CD8-positive, alpha-beta T cell (primary cell): ENCODE measurements at regions of chr19 and their contacts with region 1.

Region 1: DNA sequence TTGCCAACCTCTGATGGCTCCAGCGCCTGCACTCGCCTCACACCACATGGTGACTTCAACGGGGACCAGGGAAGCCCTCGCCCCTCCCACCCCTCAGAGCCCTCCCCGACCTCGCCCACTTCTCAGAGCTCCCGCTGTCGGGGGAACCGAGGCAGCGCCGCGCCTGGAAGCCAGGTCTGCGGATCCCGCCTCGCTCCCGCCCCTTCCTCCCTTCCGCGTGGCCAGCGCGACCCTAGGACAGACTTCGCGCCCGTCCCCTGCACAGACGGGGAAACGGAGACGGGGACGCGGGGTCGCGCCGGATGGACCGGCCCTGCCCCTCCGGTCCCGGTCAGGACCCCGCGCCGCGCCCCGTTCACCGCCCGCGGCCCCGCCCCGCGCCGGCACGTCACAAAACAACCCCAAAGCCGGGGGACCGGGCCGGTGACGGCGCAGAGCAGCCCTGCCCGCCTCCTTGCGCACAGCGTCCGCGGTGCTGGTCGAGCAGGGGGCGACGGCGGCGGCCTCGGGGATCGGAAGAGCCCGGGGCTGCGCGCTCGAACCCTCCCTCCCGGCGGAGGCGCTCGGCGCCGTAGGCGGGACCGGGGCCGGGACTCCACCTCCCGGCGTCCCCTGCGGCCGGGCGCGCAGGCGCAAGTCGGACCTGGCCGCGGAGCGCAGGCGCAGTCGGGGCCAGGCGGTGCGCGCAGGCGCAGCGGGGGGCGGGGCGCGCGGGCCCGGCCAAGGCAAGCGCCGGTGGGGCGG is 379 bp upstream of the CDC34 start:
- DNase-seq: peak; percentile 79 to 93 (median 85)
- ATAC-seq: peak; percentile 80
- H3K4me3 ChIP-seq: peak overlapping the region; percentile 64 to 87
- H3K4me3 Mint-ChIP-seq: peak overlapping the region; percentile 82
- H3K27ac ChIP-seq: peak overlapping the region; percentile 73 to 74
- H3K27ac Mint-ChIP-seq: peak overlapping the region; percentile 87
- H3K4me1 ChIP-seq: peaks cover 20% of the 10 kb centered on the region
- H3K4me1 Mint-ChIP-seq: peaks cover 14% of the 10 kb centered on the region
- H3K27me3 ChIP-seq: no peaks in the 10 kb centered on the region
- H3K27me3 Mint-ChIP-seq: peaks cover 7% of the 10 kb centered on the region
- CTCF ChIP-seq: no peak

Region 2: GRCh38 chr19:488505-489417 is 42.4 kb before region 1 on chr19:
- CTCF ChIA-PET with region 1: interaction called, 3 read pairs
- POLR2A ChIA-PET with region 1: no interaction called
- intact Hi-C with region 1: loop called in 1 of 2 experiments (anchors 1 kb)
- DNase-seq: peak; percentile 85 to 96 (median 93)
- ATAC-seq: peak; percentile 93
- H3K4me3 ChIP-seq: peak overlapping the region; percentile 55 to 84
- H3K4me3 Mint-ChIP-seq: peak overlapping the region; percentile 83
- H3K27ac ChIP-seq: peak overlapping the region; percentile 74 to 80
- H3K27ac Mint-ChIP-seq: peak overlapping the region; percentile 85
- H3K4me1 ChIP-seq: peaks cover 6% of the 10 kb centered on the region
- H3K4me1 Mint-ChIP-seq: peaks cover 11% of the 10 kb centered on the region
- H3K27me3 ChIP-seq: no peaks in the 10 kb centered on the region
- H3K27me3 Mint-ChIP-seq: peaks cover 8% of the 10 kb centered on the region
- CTCF ChIP-seq: no peak

Region 3: DNA sequence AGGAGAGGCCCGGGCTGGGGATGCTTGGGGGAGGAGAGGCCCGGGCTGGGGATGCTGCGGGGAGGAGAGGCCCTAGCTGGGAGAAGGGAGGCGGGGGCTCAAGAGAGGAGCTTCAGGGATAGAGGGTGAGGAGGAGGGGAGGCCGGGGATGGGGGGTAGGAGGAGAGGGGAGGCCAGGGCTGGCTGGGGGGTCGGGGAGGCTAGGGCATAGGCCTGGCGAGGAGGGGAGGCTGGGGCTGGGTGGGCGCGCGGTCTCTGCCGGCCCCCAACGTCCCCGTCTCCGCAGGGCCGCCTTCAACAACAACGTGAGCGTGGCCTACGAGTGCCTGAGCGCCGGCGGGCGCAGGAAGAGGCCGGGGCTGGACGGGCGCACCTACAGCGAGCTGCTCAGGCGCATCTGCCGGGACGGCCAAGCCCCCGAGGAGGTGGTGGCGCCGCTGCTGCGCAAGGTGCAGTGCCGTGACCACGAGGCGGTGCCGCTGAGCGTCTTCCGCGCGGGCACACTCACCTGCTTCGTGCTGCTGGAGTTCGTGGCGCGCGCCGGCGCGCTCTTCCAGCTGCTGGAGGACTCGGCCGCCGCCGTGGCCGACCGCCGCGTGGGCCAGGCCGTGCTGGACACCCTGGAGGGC is 12.5 kb before region 1 on chr19:
- CTCF ChIA-PET with region 1: interaction called, 7 read pairs
- POLR2A ChIA-PET with region 1: interaction called, 3 read pairs
- intact Hi-C with region 1: loop called in 1 of 2 experiments (anchors 1 kb)
- DNase-seq: peak; percentile 46 to 83 (median 78)
- ATAC-seq: peak; percentile 98
- H3K4me3 ChIP-seq: no peak overlapping the region
- H3K4me3 Mint-ChIP-seq: peak overlapping the region; percentile 29
- H3K27ac ChIP-seq: no peak overlapping the region
- H3K27ac Mint-ChIP-seq: no peak overlapping the region
- H3K4me1 ChIP-seq: peaks cover 11% of the 10 kb centered on the region
- H3K4me1 Mint-ChIP-seq: peaks cover 13% of the 10 kb centered on the region
- H3K27me3 ChIP-seq: no peaks in the 10 kb centered on the region
- H3K27me3 Mint-ChIP-seq: no peaks in the 10 kb centered on the region
- CTCF ChIP-seq: peak; percentile 46

Region 4: DNA sequence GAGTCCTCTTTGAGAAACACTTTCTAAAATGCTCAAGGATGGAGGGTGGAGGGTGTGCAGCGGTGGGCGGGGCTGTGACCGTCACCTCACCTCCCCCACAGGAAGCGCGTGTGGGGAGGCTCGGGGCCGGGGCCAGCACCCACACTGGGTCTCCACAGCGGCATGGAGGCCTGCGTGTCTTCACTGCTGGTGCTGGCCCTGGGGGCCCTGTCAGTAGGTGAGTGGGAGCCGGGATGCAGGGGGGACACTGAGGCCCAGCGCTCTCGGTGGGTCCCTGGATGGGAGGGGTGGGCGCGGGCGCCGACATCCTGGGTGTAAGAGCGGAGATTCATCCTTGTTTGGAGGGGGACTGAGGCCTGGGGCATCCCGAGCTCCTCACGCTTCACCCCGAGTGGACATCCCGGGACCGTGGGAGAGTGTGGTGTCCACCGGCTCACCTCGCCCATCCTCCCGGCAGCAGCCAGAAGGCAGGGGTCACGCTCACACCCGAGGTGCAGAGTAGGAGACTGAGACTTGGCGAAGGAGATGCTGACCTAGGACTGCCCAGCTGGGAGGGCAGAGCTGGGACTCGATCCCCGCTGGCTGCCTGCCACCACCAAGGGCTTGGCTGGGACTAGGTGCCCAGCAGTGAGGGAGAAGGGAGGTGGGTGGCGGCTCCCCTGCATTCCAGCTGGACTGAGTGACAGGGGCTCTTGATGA is 12.9 kb after region 1 on chr19 and contains the start of gene GZMM:
- CTCF ChIA-PET with region 1: interaction called, 6 read pairs
- POLR2A ChIA-PET with region 1: interaction called, 11 read pairs
- intact Hi-C with region 1: loop called (anchors 1 kb)
- DNase-seq: peak; percentile 66 to 95 (median 84)
- ATAC-seq: peak; percentile 94
- H3K4me3 ChIP-seq: peak within 1 kb of the TSS; percentile 94 to 99
- H3K4me3 Mint-ChIP-seq: peak within 1 kb of the TSS; percentile 92
- H3K27ac ChIP-seq: peak within 1 kb of the TSS; percentile 90 to 91
- H3K27ac Mint-ChIP-seq: peak within 1 kb of the TSS; percentile 94
- H3K4me1 ChIP-seq: peaks cover 20% of the 10 kb centered on the region
- H3K4me1 Mint-ChIP-seq: peaks cover 24% of the 10 kb centered on the region
- H3K27me3 ChIP-seq: no peaks in the 10 kb centered on the region
- H3K27me3 Mint-ChIP-seq: no peaks in the 10 kb centered on the region
- CTCF ChIP-seq: no peak
- total RNA-seq, gene GZMM: 117 to 119 TPM

Region 5: GRCh38 chr19:572140-572742 is 41.1 kb after region 1 on chr19 and contains the start of gene BSG:
- CTCF ChIA-PET with region 1: no interaction called
- POLR2A ChIA-PET with region 1: interaction called, 3 read pairs
- intact Hi-C with region 1: loop called (anchors 1 kb)
- DNase-seq: peak; percentile 96 to 100 (median 99)
- ATAC-seq: peak; percentile 79
- H3K4me3 ChIP-seq: peak within 1 kb of the TSS; percentile 85 to 98
- H3K4me3 Mint-ChIP-seq: peak within 1 kb of the TSS; percentile 89
- H3K27ac ChIP-seq: peak within 1 kb of the TSS; percentile 86 to 90
- H3K27ac Mint-ChIP-seq: peak within 1 kb of the TSS; percentile 96
- H3K4me1 ChIP-seq: peaks cover 26% of the 10 kb centered on the region
- H3K4me1 Mint-ChIP-seq: peaks cover 38% of the 10 kb centered on the region
- H3K27me3 ChIP-seq: no peaks in the 10 kb centered on the region
- H3K27me3 Mint-ChIP-seq: no peaks in the 10 kb centered on the region
- CTCF ChIP-seq: no peak
- total RNA-seq, gene BSG: 76.2 to 81.2 TPM

Region 6: GRCh38 chr19:633068-633785 is 102.0 kb after region 1 on chr19 and contains the start of gene POLRMT:
- CTCF ChIA-PET with region 1: no interaction called
- POLR2A ChIA-PET with region 1: no interaction called
- intact Hi-C with region 1: loop called in 1 of 2 experiments (anchors 2 kb)
- DNase-seq: peak; percentile 88 to 99 (median 95)
- ATAC-seq: peak; percentile 95
- H3K4me3 ChIP-seq: peak within 1 kb of the TSS; percentile 89 to 93
- H3K4me3 Mint-ChIP-seq: peak within 1 kb of the TSS; percentile 95
- H3K27ac ChIP-seq: peak within 1 kb of the TSS; percentile 61 to 72
- H3K27ac Mint-ChIP-seq: peak within 1 kb of the TSS; percentile 94
- H3K4me1 ChIP-seq: peaks cover 22% of the 10 kb centered on the region
- H3K4me1 Mint-ChIP-seq: peaks cover 30% of the 10 kb centered on the region
- H3K27me3 ChIP-seq: no peaks in the 10 kb centered on the region
- H3K27me3 Mint-ChIP-seq: no peaks in the 10 kb centered on the region
- CTCF ChIP-seq: no peak
- total RNA-seq, gene POLRMT: 48.6 to 53.7 TPM